ENCODE measurements at regions of chr15 and their contacts with region 1.

Region 1: GRCh38 chr15:86650093-86650492 is 570.4 kb downstream of the AGBL1 start:
- DNase-seq: peak; percentile 35
- ATAC-seq: no peak
- H3K4me3 Mint-ChIP-seq: no peak overlapping the region
- H3K27ac Mint-ChIP-seq: peak overlapping the region; percentile 70
- H3K4me1 Mint-ChIP-seq: peaks cover 61% of the 10 kb centered on the region
- H3K27me3 Mint-ChIP-seq: no peaks in the 10 kb centered on the region

Region 2: DNA sequence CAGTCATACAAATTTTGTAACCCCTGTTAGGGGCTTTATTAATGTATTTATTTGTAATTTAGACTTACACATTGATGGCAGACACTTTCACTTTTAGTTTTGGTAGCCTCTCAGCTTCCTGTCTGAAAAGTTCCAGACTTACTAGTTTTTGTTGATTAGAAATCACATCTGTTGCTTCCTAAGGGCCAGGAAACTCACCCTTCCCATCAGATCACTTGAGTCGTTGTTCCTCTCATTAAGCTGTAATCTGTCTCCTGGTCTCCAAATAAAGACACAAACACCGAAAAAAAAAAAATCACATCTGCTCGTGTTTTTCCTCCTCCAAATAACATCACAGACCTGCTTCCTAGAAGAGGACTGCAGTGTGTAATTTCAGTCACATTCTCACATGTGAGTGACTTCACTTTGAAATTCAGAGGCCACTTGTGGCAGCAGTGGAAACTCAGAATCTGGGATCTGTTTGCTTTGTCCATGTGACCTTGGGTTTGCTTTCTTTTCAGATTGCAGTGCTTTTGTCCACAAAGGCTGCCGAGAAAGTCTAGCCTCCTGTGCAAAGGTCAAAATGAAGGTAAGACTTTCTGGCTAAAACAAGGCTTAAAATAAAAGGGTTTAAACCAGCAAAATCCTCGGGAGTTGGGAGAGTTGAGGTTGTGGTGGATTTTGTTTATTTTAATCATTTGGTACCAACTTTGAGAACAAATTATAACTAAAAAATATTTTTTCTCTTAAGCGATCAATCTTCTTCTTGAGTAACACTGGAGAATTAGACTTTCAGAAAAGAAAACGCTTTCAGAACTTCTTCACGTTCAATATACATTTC is 942.4 kb before region 1 on chr15:
- CTCF ChIA-PET with region 1: no interaction called
- POLR2A ChIA-PET with region 1: no interaction called
- intact Hi-C with region 1: loop called in 1 of 2 experiments (anchors 5 kb)
- DNase-seq: peak; percentile 47
- ATAC-seq: peak; percentile 13
- H3K4me3 Mint-ChIP-seq: peak overlapping the region; percentile 68
- H3K27ac Mint-ChIP-seq: peak overlapping the region; percentile 96
- H3K4me1 Mint-ChIP-seq: peaks cover 90% of the 10 kb centered on the region
- H3K27me3 Mint-ChIP-seq: no peaks in the 10 kb centered on the region

Region 3: DNA sequence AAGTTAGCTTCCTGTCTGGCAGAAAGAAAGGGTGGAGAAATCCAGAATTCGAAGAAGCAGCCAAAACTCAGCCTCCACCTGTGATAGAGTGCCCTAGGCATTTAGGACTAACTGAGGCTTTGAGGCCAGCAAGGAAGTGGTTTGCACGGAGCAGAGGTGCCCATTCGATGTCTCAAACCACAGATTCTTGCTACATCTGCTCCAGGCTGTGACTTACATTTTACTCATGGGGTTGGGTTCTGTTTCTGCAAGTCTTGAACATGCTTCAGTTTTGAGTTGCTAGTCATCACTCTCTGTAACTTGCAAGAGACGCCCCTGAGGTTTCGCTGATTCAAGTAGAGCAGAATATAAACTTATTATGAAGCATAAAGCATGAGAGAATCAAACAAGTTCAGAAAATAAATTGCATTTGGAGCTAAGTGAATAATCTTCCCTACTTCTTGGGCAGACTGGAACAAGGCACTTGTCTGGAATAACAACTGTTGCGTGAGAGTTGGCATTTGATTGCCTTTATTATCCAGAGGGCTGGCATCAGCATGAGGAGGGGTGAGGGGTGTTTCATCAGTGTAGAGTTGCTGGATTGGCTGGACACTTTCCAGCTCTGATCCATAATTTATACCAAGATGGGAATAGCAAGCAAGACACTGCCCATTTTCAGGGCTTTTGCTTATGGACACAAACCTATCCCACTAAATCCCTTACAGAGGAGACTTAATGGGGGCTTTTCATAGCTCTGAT is 313.9 kb before region 1 on chr15:
- CTCF ChIA-PET with region 1: interaction called, 4 read pairs
- POLR2A ChIA-PET with region 1: no interaction called
- intact Hi-C with region 1: loop called in 1 of 2 experiments (anchors 10 kb)
- DNase-seq: peak; percentile 38
- ATAC-seq: peak; percentile 83
- H3K4me3 Mint-ChIP-seq: no peak overlapping the region
- H3K27ac Mint-ChIP-seq: no peak overlapping the region
- H3K4me1 Mint-ChIP-seq: peaks cover 16% of the 10 kb centered on the region
- H3K27me3 Mint-ChIP-seq: peaks cover 6% of the 10 kb centered on the region

Region 4: GRCh38 chr15:86558686-86559085 is 91.4 kb before region 1 on chr15:
- CTCF ChIA-PET with region 1: no interaction called
- POLR2A ChIA-PET with region 1: no interaction called
- intact Hi-C with region 1: no loop called
- DNase-seq: no peak
- ATAC-seq: no peak
- H3K4me3 Mint-ChIP-seq: no peak overlapping the region
- H3K27ac Mint-ChIP-seq: no peak overlapping the region
- H3K4me1 Mint-ChIP-seq: no peaks in the 10 kb centered on the region
- H3K27me3 Mint-ChIP-seq: no peaks in the 10 kb centered on the region

Region 5: GRCh38 chr15:86611417-86612040 is 38.6 kb before region 1 on chr15:
- CTCF ChIA-PET with region 1: interaction called, 4 read pairs
- POLR2A ChIA-PET with region 1: no interaction called
- intact Hi-C with region 1: loop called (anchors 1 to 2 kb)
- DNase-seq: peak; percentile 37
- ATAC-seq: peak; percentile 86
- H3K4me3 Mint-ChIP-seq: no peak overlapping the region
- H3K27ac Mint-ChIP-seq: no peak overlapping the region
- H3K4me1 Mint-ChIP-seq: peaks cover 54% of the 10 kb centered on the region
- H3K27me3 Mint-ChIP-seq: no peaks in the 10 kb centered on the region

Region 6: DNA sequence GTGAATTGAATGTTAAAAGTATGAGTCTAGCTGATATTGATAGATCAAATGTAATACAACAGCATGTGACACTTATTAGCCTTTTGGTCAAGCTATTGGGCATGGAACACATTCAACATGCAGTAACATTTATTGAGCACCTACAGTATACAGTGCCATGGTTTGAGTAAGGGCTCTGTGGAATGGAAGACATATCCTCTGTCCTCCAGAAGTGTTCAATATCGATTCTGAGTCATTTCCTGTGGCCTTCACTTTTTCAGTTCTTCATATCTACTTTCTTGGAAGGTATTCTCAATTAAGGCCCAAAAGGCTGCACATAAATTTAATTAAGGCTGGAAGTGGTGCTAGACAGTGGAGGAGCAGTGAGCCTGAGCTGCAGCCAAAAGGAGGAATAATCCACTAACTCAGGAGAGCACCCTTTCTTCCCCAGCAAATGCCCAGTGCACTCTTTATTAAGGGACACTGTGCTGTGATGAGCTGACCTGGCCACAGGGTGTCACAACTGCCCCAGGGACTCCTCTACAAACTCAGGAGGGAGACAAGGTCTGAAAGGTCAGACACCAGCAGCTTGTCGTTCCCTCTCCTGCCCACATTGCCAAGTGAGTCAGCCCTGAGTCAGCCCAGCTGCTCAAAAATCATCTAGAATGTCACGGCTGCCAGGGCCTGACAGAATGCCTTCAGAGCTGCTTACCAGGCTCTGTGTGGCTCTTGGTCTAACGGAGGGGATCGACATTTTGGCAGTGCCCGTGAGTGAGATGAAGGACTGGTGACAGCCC is 25.6 kb before region 1 on chr15:
- CTCF ChIA-PET with region 1: interaction called, 9 read pairs
- POLR2A ChIA-PET with region 1: interaction called, 3 read pairs
- intact Hi-C with region 1: loop called (anchors 1 to 2 kb)
- DNase-seq: peak; percentile 90
- ATAC-seq: peak; percentile 100
- H3K4me3 Mint-ChIP-seq: peak overlapping the region; percentile 15
- H3K27ac Mint-ChIP-seq: peak overlapping the region; percentile 53
- H3K4me1 Mint-ChIP-seq: peaks cover 42% of the 10 kb centered on the region
- H3K27me3 Mint-ChIP-seq: peaks cover 4% of the 10 kb centered on the region

Region 7: GRCh38 chr15:86743283-86743903 is 93.3 kb after region 1 on chr15:
- CTCF ChIA-PET with region 1: interaction called, 10 read pairs
- POLR2A ChIA-PET with region 1: no interaction called
- intact Hi-C with region 1: loop called in 1 of 2 experiments (anchors 1 kb)
- DNase-seq: peak; percentile 77
- ATAC-seq: peak; percentile 70
- H3K4me3 Mint-ChIP-seq: no peak overlapping the region
- H3K27ac Mint-ChIP-seq: no peak overlapping the region
- H3K4me1 Mint-ChIP-seq: peaks cover 2% of the 10 kb centered on the region
- H3K27me3 Mint-ChIP-seq: no peaks in the 10 kb centered on the region

Measured in activated CD4-positive, alpha-beta T cell treated with anti-CD3 and anti-CD28 coated beads for 36 hours (primary cell).